K562 (cell line): ENCODE measurements at regions of chr3 and their contacts with region 1.

Region 1: DNA sequence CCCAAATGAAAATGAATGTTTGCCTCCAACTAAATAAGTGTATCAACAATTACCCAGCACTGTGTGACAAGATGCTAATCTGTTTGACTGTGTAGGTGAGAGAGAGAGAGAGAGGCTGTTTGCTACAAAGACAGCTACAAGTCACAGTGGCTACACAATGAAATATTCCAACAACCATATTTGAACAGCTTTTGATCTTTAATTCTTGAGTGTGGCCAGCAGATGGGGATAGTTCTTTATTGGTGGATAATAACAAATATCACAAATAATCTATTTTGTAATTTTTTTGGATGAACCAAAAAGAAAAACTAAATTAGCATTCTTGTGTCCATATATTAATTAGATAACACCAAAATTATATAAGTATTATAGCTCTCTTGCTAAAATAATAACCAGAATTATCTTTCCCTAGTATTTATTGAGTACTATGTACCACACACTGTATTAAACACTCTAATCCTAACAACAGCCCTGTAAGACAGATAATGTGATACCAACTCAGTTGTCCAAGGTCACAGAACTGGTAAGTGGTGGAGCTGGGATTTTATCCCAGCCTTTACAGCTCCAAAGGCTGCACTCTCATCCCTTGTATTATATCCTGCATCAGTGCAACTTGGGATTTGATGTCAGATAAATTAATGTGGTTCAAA is 61.9 kb upstream of the C3orf80 start:
- DNase-seq: peak in 2 of 4 experiments; percentile 12 to 14
- ATAC-seq: peak; percentile 66
- H3K4me3 ChIP-seq: no peak overlapping the region
- H3K27ac ChIP-seq: no peak overlapping the region
- H3K4me1 ChIP-seq: no peaks in the 10 kb centered on the region
- H3K27me3 ChIP-seq: peaks cover 0 to 2% of the 10 kb centered on the region in 2 experiments; a peak in 1 of 5 replicates
- CTCF ChIP-seq: peak; percentile 35 to 64 (median 38); a peak in 3 of 6 replicates
- EP300 ChIP-seq: no peak
- POLR2A ChIP-seq: no peak
- RAD21 ChIP-seq: peak; percentile 88 to 92

Region 2: GRCh38 chr3:160343132-160343531 is 179.8 kb after region 1 on chr3:
- CTCF ChIA-PET with region 1: interaction called, 21 read pairs
- POLR2A ChIA-PET with region 1: no interaction called
- in situ Hi-C with region 1: no loop called
- intact Hi-C with region 1: loop called (anchors 2 kb)
- DNase-seq: peak in 2 of 4 experiments; percentile 10 to 12
- ATAC-seq: no peak
- H3K4me3 ChIP-seq: no peak overlapping the region
- H3K27ac ChIP-seq: no peak overlapping the region
- H3K4me1 ChIP-seq: no peaks in the 10 kb centered on the region
- H3K27me3 ChIP-seq: no peaks in the 10 kb centered on the region
- CTCF ChIP-seq: peak in 2 of 3 experiments; percentile 35 to 63; a peak in 3 of 6 replicates
- EP300 ChIP-seq: no peak
- POLR2A ChIP-seq: no peak
- RAD21 ChIP-seq: peak; percentile 82 to 85